ENCODE measurements at regions of chr13 and their contacts with region 1.

Region 1: DNA sequence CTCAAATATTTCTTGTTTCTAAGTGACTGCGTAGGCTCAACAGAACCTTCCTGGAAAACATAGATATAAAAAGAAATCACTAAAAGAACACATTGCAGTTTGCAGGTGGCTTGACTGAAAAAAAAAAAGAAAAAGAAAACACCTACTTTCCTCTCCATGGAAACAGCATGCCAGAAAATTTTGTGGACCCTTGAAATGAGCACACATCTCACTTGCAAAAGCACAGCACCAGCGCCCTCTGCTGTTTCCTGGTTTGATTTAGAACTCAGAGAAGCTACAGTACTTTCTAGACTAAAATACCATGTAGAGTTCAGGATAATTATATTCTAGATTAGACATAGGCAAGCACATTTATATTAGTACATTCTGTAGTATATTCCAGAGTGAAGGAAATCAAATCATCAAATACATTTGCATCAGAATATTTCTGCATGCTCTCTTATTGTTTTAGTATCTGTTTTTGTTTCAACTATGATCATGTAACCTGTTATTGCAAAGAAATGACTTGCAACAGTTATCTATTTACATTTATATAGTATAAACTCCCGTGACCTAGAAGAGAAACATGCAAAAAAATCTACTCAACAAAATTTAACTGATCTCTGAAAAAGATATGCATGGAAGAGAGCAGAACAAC is 22.3 kb upstream of the XPO4 start:
- DNase-seq: peak; percentile 79
- H3K4me3 ChIP-seq: no peak overlapping the region
- H3K27ac ChIP-seq: no peak overlapping the region
- H3K4me1 ChIP-seq: no peaks in the 10 kb centered on the region
- H3K27me3 ChIP-seq: no peaks in the 10 kb centered on the region
- CTCF ChIP-seq: peak; percentile 48 to 72 (median 72)
- EP300 ChIP-seq: no peak
- POLR2A ChIP-seq: no peak

Region 2: DNA sequence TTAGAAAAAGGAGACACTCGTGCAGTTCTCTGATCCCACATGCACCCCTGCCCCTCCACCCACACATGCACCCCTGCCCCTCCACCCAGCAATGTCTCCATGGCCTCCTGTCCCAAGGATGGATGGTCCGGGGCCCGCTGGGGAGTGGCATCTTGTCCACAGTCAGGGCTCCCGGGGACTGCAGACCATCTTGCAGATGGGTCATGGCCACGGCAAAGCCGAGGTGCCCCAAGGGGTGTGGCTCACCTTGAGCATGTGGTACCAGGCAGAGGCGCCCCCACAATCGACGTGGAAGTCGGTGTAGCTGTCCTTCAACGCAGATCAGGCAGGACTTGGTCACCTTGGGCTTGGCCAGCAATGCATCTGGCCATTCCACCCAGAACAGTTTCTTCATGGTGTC is 1959.9 kb before region 1 on chr13:
- in situ Hi-C with region 1: no loop called
- intact Hi-C with region 1: loop called (anchors 5 kb)
- DNase-seq: no peak
- H3K4me3 ChIP-seq: no peak overlapping the region
- H3K27ac ChIP-seq: no peak overlapping the region
- H3K4me1 ChIP-seq: no peaks in the 10 kb centered on the region
- H3K27me3 ChIP-seq: no peaks in the 10 kb centered on the region
- CTCF ChIP-seq: no peak
- EP300 ChIP-seq: no peak
- POLR2A ChIP-seq: no peak

Region 3: GRCh38 chr13:20495082-20496023 is 429.5 kb before region 1 on chr13:
- in situ Hi-C with region 1: loop called in 3 of 4 experiments (anchors 10 to 25 kb)
- intact Hi-C with region 1: loop called (anchors 5 kb)
- DNase-seq: peak; percentile 73
- H3K4me3 ChIP-seq: no peak overlapping the region
- H3K27ac ChIP-seq: peak overlapping the region in 2 of 4 donors; percentile 25 to 34
- H3K4me1 ChIP-seq: peaks cover 5 to 13% (median 8%) of the 10 kb centered on the region in 4 donors
- H3K27me3 ChIP-seq: no peaks in the 10 kb centered on the region
- CTCF ChIP-seq: peak; percentile 91 to 98 (median 94)
- EP300 ChIP-seq: no peak
- POLR2A ChIP-seq: peak; percentile 12

Region 4: GRCh38 chr13:20713751-20714150 is 211.1 kb before region 1 on chr13:
- in situ Hi-C with region 1: loop called (anchors 5 to 25 kb)
- intact Hi-C with region 1: loop called (anchors 5 kb)
- DNase-seq: no peak
- H3K4me3 ChIP-seq: no peak overlapping the region
- H3K27ac ChIP-seq: peak overlapping the region in 3 of 4 donors; percentile 40 to 44 (median 43)
- H3K4me1 ChIP-seq: peaks cover 0 to 14% (median 9%) of the 10 kb centered on the region in 4 donors
- H3K27me3 ChIP-seq: peaks cover 5% of the 10 kb centered on the region
- CTCF ChIP-seq: no peak
- EP300 ChIP-seq: no peak
- POLR2A ChIP-seq: no peak

Region 5: GRCh38 chr13:21476893-21477472 is 552.1 kb after region 1 on chr13:
- in situ Hi-C with region 1: loop called in 3 of 4 experiments (anchors 10 to 25 kb)
- intact Hi-C with region 1: loop called (anchors 10 kb)
- DNase-seq: peak; percentile 87
- H3K4me3 ChIP-seq: peak overlapping the region in 3 of 4 donors; percentile 22 to 50 (median 36)
- H3K27ac ChIP-seq: peak overlapping the region in 3 of 4 donors; percentile 23 to 70 (median 58)
- H3K4me1 ChIP-seq: peaks cover 0 to 17% (median 4%) of the 10 kb centered on the region in 4 donors
- H3K27me3 ChIP-seq: peaks cover 5% of the 10 kb centered on the region
- CTCF ChIP-seq: peak; percentile 94 to 99 (median 97)
- EP300 ChIP-seq: no peak
- POLR2A ChIP-seq: peak; percentile 10

Measured in transverse colon (tissue), 4 donors.